ENCODE measurements at regions of chr2 and their contacts with region 1.

Region 1: DNA sequence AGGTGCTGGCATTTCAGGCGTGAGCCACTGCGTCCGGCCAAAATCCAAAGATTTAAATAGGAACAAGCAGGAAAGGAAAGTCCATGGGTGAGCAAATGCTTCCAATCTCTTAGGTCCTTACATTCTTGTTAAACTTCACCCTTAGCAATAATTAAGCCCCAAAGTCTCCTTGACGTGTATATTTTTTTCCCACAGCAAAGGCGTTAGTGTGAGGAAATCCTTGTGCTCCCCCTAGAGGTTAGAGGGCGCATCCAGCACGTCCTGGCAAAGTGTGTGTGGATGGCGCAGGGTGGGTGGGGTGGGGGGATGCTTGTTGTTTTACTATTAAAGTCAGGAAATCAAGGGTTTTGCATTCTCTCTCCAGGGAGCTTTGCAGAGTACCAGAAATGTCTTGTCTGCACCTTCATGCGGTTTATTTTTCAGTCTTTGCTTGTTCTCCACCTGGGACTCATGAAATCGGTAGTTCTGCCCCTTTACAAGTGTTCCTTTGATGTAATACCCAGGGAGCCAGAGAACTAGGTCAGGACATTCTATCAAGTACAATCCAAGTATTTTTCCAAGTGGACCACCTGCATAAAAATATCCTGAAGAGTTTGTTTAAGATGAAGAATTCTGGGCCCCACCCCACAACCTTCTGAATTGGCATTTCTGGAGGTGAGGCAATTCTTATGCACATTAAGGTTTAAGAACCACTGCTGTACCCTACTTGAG is 22.2 kb upstream of the ITSN2 start:
- ATAC-seq: peak; percentile 75 to 98 (median 83)
- H3K4me3 ChIP-seq: no peak overlapping the region
- H3K27ac ChIP-seq: no peak overlapping the region
- H3K4me1 ChIP-seq: no peaks in the 10 kb centered on the region

Region 2: DNA sequence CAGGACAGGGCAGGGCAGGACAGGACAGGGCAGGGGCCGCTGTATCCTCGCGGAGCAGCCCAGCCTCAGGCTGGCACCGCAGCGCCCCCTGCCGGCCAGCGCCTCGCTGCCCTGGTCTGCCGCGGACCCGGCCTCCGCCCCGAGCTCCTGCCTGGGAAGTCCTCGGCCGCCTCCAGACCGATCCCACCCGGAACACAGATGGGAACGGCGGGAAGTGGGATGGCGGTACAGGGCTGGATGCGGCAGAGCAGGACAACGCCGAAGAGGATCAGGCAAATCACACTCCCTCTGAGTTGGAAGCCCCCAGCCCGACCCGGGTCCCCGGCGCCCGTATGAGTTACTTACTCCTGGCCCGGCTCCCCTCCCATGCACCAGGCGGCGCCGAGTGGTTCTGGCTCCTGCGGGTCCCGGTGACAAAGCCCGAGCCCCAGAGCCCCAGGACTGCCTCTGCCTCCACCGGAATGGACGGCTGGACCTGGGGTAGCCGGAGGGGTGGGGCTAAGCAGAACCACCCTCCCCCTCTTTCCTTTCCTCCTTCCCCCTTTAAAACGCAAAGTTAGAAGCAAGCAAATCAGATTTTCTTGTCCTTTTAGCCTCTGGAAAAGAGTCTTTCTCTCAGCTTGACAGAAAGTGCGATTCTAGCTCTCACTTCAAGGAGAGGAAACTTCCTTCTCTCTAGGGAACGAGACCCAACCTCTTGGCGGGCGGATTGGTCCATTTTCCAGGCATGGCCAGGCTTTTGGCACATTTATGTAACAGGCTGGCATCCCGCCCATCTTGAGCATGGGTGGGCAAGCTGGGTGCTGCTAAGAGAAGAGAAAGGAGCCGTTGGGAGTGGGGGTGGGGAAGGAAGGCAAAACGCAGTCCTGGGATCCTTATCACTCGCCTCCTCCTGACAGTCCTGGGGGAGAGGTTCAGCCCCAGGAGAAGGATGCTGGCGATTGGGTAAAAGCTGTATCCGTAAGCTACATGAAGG is 297.8 kb before region 1 on chr2 and contains the start of gene TP53I3:
- in situ Hi-C with region 1: loop called in 1 of 9 experiments (anchors 25 kb)
- ATAC-seq: peak; percentile 74 to 97 (median 94)
- H3K4me3 ChIP-seq: peak within 1 kb of the TSS; percentile 32 to 48 (median 45)
- H3K27ac ChIP-seq: peak within 1 kb of the TSS; percentile 67 to 89
- H3K4me1 ChIP-seq: peaks cover 4 to 8% of the 10 kb centered on the region in 2 donors
- total RNA-seq, gene TP53I3: 7.5 to 177 (median 30.4) TPM

Region 3: GRCh38 chr2:24147364-24147763 is 235.2 kb before region 1 on chr2:
- in situ Hi-C with region 1: loop called in 1 of 9 experiments (anchors 25 kb)
- ATAC-seq: no peak
- H3K4me3 ChIP-seq: no peak overlapping the region
- H3K27ac ChIP-seq: no peak overlapping the region
- H3K4me1 ChIP-seq: no peaks in the 10 kb centered on the region

Region 4: DNA sequence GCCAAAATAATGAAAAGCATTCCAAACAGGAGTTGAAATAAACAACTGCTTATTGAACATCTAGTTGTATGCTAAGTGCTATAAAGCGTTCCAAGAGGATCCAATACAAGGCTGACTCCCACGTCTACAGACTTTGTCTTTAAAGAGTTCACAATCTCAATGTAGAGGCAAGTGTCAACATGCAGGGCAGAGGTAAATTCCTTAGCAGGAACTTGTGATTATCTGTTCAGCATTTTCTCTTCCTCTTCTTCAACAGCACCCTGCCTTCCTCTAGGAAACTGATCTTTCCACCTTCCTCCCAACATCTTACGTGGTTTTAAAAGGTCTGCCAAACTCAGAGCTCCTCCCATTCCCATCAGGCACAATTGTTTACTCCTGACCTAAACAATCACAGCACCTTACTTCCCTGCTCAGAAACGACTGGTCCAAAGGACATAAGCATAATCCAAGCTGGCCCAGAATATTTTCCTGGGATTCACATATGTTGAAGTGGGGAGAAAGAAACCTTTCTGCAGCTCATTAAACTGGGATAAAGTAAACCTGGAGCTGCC is 106.1 kb before region 1 on chr2:
- in situ Hi-C with region 1: no loop called
- ATAC-seq: no peak
- H3K4me3 ChIP-seq: no peak overlapping the region
- H3K27ac ChIP-seq: no peak overlapping the region
- H3K4me1 ChIP-seq: no peaks in the 10 kb centered on the region

Measured in motor neuron (in vitro differentiated cells).